ENCODE measurements at regions of chr14 and their contacts with region 1.

Region 1: GRCh38 chr14:34875031-34875922 is at the start of gene BAZ1A:
- DNase-seq: peak; percentile 74 to 85 (median 83)
- ATAC-seq: peak; percentile 66 to 79
- H3K4me3 ChIP-seq: peak within 1 kb of the TSS; percentile 84
- H3K27ac ChIP-seq: peak within 1 kb of the TSS; percentile 91
- H3K4me1 ChIP-seq: no peaks in the 10 kb centered on the region
- H3K27me3 ChIP-seq: no peaks in the 10 kb centered on the region
- total RNA-seq, gene BAZ1A: 5.7 to 11.5 (median 7.4) TPM

Region 2: GRCh38 chr14:34982417-34983147 is 107.3 kb after region 1 on chr14 and contains the start of gene SRP54:
- intact Hi-C with region 1: loop called in 1 of 4 experiments (anchors 10 kb)
- DNase-seq: peak; percentile 97 to 99 (median 99)
- ATAC-seq: peak; percentile 97 to 98
- H3K4me3 ChIP-seq: peak within 1 kb of the TSS; percentile 77
- H3K27ac ChIP-seq: peak within 1 kb of the TSS; percentile 91
- H3K4me1 ChIP-seq: peaks cover 1% of the 10 kb centered on the region
- H3K27me3 ChIP-seq: no peaks in the 10 kb centered on the region
- total RNA-seq, gene SRP54: 31.1 to 34.1 (median 33.0) TPM

Measured in right cardiac atrium (tissue), 5 donors.